ENCODE measurements at regions of chr7 and their contacts with region 1.

Region 1: GRCh38 chr7:148884299-148885022 is 370 bp upstream of the EZH2 start:
- DNase-seq: peak; percentile 92
- H3K4me3 ChIP-seq: peak overlapping the region; percentile 74 to 97 (median 95)
- H3K27ac ChIP-seq: peak overlapping the region; percentile 81
- H3K4me1 ChIP-seq: peaks cover 9% of the 10 kb centered on the region
- H3K27me3 ChIP-seq: no peaks in the 10 kb centered on the region
- CTCF ChIP-seq: no peak
- POLR2A ChIP-seq: peak; percentile 72

Region 2: GRCh38 chr7:148698397-148699023 is 186.0 kb before region 1 on chr7 and contains the start of gene CUL1:
- CTCF ChIA-PET with region 1: no interaction called
- POLR2A ChIA-PET with region 1: no interaction called
- dilution Hi-C with region 1: no loop called
- intact Hi-C with region 1: loop called (anchors 1 kb)
- DNase-seq: peak; percentile 67
- H3K4me3 ChIP-seq: peak within 1 kb of the TSS; percentile 53 to 99 (median 72)
- H3K27ac ChIP-seq: peak within 1 kb of the TSS; percentile 87
- H3K4me1 ChIP-seq: peaks cover 33% of the 10 kb centered on the region
- H3K27me3 ChIP-seq: no peaks in the 10 kb centered on the region
- CTCF ChIP-seq: no peak
- POLR2A ChIP-seq: peak; percentile 63
- total RNA-seq, gene CUL1: 47.2 and 50.2 TPM in 2 replicates

Region 3: DNA sequence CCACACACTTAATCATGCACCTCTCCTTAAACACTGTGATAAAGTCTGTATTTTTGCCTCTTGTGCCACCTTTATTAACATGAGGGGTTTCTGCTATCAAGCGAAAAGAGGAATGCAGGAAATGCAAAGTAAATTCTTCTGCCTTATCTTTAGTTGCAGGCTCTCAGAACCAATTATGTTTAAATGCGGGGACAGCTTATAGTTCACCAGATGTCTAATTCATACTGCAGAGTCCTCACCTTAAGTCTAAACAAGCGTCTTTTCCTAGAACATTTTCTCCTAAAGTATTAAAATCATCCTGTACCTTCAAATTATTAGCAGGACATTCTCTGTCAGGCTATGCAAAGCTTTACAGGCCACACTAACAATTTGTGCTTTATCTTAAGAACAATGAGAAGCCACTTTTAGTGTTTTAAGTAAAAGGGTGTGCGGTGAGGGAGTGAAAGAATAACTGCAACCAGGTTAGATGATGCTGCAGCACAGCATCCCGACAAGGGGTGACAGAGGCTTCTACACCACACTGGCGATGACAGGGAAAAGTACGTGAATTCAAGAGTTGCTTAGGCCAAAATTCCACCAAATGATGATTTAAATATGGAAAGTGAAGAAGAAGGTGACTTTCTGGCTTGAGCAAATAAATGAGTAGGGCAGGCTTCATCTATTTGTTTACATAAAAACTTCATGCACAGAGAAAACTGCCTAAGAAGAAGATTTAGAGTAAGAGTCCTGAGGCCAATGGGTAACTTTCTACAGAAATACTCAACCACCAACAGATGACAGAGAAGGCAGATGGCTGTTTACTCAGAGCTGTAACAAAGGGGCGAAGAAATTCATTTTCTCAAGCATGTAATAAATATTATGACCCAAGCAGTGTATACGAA is 36.4 kb before region 1 on chr7:
- CTCF ChIA-PET with region 1: interaction called, 3 read pairs
- POLR2A ChIA-PET with region 1: no interaction called
- dilution Hi-C with region 1: no loop called
- intact Hi-C with region 1: loop called (anchors 2 kb)
- DNase-seq: peak; percentile 64
- H3K4me3 ChIP-seq: no peak overlapping the region
- H3K27ac ChIP-seq: peak overlapping the region; percentile 6
- H3K4me1 ChIP-seq: peaks cover 37% of the 10 kb centered on the region
- H3K27me3 ChIP-seq: no peaks in the 10 kb centered on the region
- CTCF ChIP-seq: no peak
- POLR2A ChIP-seq: no peak

Region 4: DNA sequence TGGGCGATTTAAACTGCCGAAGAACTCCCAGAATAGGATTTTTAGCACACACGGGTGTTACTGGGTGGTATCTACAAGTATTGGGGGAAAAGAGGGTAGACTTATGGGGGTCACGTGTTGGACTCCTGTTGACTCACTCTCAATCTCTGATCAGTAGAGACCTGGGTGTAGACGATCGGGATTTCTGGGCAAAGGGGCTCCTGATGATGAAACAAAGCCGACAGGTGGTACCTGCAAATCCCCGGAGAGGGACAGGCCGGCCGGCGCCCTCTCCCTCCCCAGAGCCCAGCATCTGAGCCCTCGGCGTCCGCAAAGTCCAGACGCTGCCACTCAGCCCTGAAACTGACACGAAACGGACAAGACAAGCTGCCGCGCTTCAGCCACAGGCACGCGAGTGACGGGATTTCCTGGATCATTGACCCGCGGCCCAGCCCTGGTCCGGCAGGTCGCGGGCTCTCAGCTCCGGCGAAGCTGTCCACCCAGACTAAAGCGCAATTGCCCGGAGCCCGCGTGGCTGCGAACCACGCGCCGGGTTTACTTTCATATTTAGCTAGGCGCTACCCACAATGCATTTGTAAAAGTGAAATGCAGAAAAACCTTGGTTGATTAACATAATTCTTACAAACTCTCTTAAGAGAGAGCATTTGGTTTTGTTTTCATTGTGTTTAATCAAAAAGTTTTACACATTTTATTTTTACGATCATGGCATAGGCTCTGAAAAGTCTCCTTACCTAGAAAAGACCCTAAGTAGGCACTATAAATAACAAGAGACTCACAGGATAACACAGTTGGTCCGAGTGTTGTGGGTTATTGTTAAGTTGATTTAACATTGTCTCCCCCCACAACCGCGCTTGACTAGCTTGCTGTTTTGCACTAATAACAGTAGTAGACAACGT is 56.5 kb after region 1 on chr7:
- CTCF ChIA-PET with region 1: interaction called, 4 read pairs
- POLR2A ChIA-PET with region 1: no interaction called
- dilution Hi-C with region 1: no loop called
- intact Hi-C with region 1: loop called (anchors 1 kb)
- DNase-seq: peak; percentile 90
- H3K4me3 ChIP-seq: peak overlapping the region; percentile 85 to 98 (median 88)
- H3K27ac ChIP-seq: peak overlapping the region; percentile 91
- H3K4me1 ChIP-seq: peaks cover 13% of the 10 kb centered on the region
- H3K27me3 ChIP-seq: no peaks in the 10 kb centered on the region
- CTCF ChIP-seq: no peak
- POLR2A ChIP-seq: peak; percentile 42

Region 5: DNA sequence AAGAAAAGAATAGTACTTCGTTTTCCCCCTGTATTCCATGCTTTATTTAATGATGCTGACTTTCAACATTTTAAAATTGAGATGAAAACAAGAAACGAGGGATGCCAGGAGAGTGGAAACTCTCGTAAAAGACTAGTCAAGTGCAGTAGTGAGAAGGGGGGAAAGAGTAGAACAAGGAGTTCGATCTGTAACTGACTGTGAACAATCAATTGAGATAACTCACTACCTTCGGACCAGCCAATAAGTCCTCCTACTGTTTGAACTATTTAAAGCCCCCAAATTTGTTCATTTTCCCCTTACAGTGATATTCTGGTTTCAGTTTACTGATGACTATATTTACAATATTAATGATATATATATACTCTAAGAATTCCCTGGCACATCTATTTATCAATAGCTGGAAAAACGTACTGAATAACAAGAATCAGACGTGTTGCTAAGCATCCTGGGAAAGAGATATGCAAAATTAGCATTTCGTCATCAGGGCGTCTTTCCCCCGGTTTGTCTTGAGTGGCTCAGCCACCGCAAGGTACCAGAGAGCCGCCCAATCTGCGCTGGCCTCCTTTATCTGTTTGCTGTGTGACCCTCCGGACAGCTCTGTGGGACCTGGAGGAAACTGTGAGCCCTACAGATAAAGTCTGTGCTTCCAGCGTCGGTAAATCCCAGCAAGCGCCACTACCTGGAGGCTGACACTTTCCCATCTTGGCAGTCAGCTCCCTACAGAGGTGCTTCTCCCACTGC is 102.7 kb after region 1 on chr7:
- CTCF ChIA-PET with region 1: no interaction called
- POLR2A ChIA-PET with region 1: no interaction called
- dilution Hi-C with region 1: no loop called
- intact Hi-C with region 1: loop called (anchors 1 kb)
- DNase-seq: peak; percentile 94
- H3K4me3 ChIP-seq: peak overlapping the region; percentile 21 to 63 (median 56)
- H3K27ac ChIP-seq: peak overlapping the region; percentile 32
- H3K4me1 ChIP-seq: peaks cover 11% of the 10 kb centered on the region
- H3K27me3 ChIP-seq: peaks cover 0 to 10% of the 10 kb centered on the region in 2 experiments
- CTCF ChIP-seq: no peak
- POLR2A ChIP-seq: peak; percentile 63

Region 6: GRCh38 chr7:149001421-149002068 is 117.1 kb after region 1 on chr7:
- CTCF ChIA-PET with region 1: no interaction called
- POLR2A ChIA-PET with region 1: no interaction called
- dilution Hi-C with region 1: no loop called
- intact Hi-C with region 1: no loop called
- DNase-seq: no peak
- H3K4me3 ChIP-seq: no peak overlapping the region
- H3K27ac ChIP-seq: no peak overlapping the region
- H3K4me1 ChIP-seq: no peaks in the 10 kb centered on the region
- H3K27me3 ChIP-seq: no peaks in the 10 kb centered on the region
- CTCF ChIP-seq: no peak
- POLR2A ChIP-seq: no peak

Region 7: DNA sequence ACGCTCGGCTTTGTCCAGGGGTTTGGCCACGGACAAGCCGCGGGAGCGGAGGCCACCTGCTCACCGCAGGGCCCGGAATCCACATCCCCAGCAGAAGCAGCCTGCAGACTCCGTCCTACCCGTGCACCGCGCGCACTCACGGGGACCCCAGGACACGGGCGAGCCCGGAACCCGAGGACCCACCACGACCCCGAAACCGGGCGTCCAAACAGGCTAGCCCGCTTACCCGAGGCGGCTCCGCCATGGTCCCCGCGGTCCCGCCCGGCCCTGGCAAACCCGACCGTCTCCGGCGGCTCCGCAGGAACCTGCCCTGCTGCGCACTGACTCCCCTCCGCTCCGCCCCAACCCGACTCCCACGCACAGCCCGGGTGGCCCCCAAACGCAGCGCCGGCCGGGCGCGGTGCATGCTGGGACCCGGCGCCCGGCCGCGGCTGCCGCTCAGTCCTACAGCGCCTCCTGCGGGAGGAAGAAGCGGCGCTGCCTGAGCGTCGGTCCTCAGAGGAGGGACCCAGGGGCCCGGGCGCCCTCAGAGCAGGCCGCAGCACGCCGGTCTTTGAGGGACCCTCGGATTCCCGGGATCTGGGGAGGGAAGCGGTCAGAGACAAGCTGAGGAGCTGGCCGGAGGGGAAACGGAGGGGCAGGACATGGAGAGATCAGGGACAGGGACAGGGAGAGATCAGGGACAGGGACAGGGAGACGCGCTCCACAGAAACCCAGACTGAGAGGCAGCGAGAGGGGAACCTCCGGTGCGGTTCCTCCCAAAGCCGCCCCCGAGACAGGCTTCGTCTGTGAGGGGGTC is 206.1 kb after region 1 on chr7 and contains the start of gene ZNF786:
- CTCF ChIA-PET with region 1: no interaction called
- POLR2A ChIA-PET with region 1: no interaction called
- dilution Hi-C with region 1: no loop called
- intact Hi-C with region 1: loop called (anchors 1 kb)
- DNase-seq: peak; percentile 87
- H3K4me3 ChIP-seq: peak within 1 kb of the TSS; percentile 76 to 96 (median 89)
- H3K27ac ChIP-seq: peak within 1 kb of the TSS; percentile 32
- H3K4me1 ChIP-seq: peaks cover 6% of the 10 kb centered on the region
- H3K27me3 ChIP-seq: no peaks in the 10 kb centered on the region
- CTCF ChIP-seq: peak; percentile 89 to 96
- POLR2A ChIP-seq: peak; percentile 71
- total RNA-seq, gene ZNF786: 5.4 and 5.9 TPM in 2 replicates